Left ventricle myocardium inferior (tissue), 1 donor: ENCODE measurements at regions of chr11 and their contacts with region 1.

Region 1: GRCh38 chr11:74726547-74727182 is 4.6 kb downstream of the CHRDL2 start:
- DNase-seq: peak; percentile 72
- H3K4me3 ChIP-seq: no peak overlapping the region
- H3K27ac ChIP-seq: peak overlapping the region; percentile 65
- H3K4me1 ChIP-seq: peaks cover 22% of the 10 kb centered on the region
- H3K27me3 ChIP-seq: peaks cover 25% of the 10 kb centered on the region
- CTCF ChIP-seq: peak; percentile 97

Region 2: DNA sequence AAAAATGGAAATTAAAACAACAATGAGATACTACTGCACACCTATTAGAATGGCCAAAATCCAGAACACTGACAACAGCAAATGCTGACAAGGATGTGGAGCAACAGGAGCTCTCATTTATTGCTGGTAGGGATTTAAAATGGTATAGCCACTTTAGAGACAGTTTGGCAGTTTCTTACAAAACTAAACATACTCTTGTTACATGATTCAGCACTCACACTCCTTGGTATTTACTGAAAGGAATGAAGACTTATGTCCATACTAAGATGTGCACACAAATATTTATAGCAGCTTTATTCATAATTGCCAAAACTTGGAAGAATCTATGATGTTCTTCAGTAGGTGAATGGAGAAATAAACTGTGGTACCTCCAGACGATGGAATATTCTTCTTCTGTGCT is 369.2 kb before region 1 on chr11:
- intact Hi-C with region 1: no loop called
- DNase-seq: no peak
- H3K4me3 ChIP-seq: no peak overlapping the region
- H3K27ac ChIP-seq: no peak overlapping the region
- H3K4me1 ChIP-seq: no peaks in the 10 kb centered on the region
- H3K27me3 ChIP-seq: no peaks in the 10 kb centered on the region
- CTCF ChIP-seq: no peak

Region 3: GRCh38 chr11:74634537-74634936 is 92.1 kb before region 1 on chr11:
- intact Hi-C with region 1: loop called (anchors 10 kb)
- DNase-seq: no peak
- H3K4me3 ChIP-seq: no peak overlapping the region
- H3K27ac ChIP-seq: no peak overlapping the region
- H3K4me1 ChIP-seq: no peaks in the 10 kb centered on the region
- H3K27me3 ChIP-seq: no peaks in the 10 kb centered on the region
- CTCF ChIP-seq: peak; percentile 57